AG04450 (cell line): ENCODE measurements at regions of chr12 and their contacts with region 1.

Region 1: DNA sequence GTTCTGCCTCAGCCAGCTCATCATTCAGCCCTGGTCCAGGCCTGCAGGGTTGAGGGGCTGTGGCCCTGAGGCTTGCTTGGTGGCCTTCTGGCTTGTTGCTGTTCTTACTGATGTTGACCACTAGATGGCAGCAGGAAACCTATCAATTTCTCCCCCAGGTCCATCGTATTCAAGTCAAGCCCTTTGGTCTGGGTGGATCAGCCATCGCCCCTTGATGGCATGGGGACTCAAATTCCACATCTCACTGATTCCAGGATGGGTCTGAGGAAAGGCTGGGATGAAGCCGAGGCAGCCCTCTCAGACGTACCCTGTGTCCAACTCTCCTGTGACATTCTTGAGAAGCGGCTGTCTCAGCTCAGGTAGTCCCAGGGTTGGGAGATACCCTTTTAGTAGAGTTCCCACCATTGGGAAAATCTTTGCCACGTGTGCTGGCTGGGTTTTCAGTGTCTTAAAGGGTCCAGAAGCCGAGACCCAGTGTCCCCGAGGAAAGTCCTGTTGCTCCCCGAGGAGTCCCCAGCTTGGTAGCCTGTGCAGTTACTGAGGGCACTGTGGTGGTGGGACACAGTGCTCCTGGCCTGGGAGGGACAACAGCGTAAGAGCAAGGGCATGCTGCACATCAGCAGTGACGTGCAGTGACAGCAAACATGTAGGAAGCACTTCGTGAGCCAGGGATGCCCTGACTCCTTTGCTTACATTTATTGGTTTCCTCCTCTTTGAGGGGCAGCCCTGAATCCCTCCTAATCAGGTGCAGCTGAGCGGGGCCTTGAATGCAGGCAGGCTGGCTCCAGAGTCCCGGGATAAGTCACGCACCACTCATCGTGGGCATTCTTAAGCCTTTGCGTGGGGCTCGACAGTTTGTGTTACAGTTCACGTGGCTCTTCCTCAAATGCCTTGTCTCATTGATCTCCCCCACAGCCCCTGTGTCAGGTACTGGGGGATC is 58.6 kb downstream of the TSPAN9 start:
- DNase-seq: peak; percentile 66
- H3K4me3 ChIP-seq: no peak overlapping the region
- H3K27ac ChIP-seq: no peak overlapping the region
- H3K27me3 ChIP-seq: no peaks in the 10 kb centered on the region
- CTCF ChIP-seq: peak; percentile 78

Region 2: DNA sequence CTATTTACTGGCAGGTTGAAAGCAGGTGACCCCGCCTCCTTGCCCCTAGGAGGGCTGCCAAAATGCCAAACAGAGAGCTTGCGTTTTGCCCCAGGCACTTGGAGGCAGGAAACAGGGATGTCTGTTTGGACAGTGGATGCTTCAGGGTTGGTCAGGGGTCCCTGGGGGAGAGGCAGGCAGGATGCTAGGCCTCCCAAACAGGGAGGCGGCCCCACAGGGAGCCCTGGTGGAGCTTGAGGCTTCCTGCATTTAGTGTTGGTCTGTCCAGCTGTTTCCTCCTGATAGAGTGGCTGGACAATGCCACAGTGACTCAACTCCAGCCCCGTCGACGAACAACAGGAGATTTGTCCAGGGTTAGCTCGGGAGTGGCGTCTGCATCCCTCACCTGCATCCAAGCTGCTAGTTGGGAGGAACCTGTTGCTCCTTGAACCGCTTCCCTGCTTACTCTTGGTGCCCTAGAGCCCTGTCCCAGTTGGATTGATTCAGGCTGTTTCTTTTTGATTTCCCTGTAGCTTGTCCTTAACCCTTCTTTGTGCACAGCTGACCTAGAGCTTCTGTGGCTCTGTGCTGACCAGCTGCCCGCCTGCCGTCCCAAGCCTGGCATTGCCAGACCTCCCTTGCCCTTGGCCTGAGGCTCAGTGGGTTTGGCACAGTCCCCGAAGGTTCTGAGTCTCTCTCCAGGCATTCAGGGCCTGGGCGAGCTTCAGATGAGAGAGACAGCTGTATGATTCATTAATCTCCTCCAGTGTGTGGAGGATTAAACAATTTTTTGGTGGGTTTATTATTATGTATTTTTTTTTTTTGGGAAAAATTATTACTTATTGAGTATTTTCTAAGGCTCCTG is 12.7 kb before region 1 on chr12:
- CTCF ChIA-PET with region 1: interaction called, 19 read pairs
- POLR2A ChIA-PET with region 1: no interaction called
- DNase-seq: no peak
- H3K4me3 ChIP-seq: no peak overlapping the region
- H3K27ac ChIP-seq: peak overlapping the region; percentile 73
- H3K27me3 ChIP-seq: no peaks in the 10 kb centered on the region
- CTCF ChIP-seq: peak; percentile 33

Region 3: GRCh38 chr12:3148366-3149000 is 12.7 kb after region 1 on chr12:
- CTCF ChIA-PET with region 1: interaction called, 23 read pairs
- POLR2A ChIA-PET with region 1: interaction called, 3 read pairs
- DNase-seq: no peak
- H3K4me3 ChIP-seq: no peak overlapping the region
- H3K27ac ChIP-seq: no peak overlapping the region
- H3K27me3 ChIP-seq: no peaks in the 10 kb centered on the region
- CTCF ChIP-seq: no peak